Calu3 (cell line): ENCODE measurements at regions of chr1 and their contacts with region 1.

Region 1: GRCh38 chr1:167276969-167277368 is 56.3 kb downstream of the POU2F1 start:
- DNase-seq: no peak
- H3K4me3 Mint-ChIP-seq: no peak overlapping the region
- H3K27ac Mint-ChIP-seq: no peak overlapping the region
- H3K4me1 Mint-ChIP-seq: peaks cover 9% of the 10 kb centered on the region
- H3K27me3 Mint-ChIP-seq: no peaks in the 10 kb centered on the region
- CTCF ChIP-seq: no peak

Region 2: DNA sequence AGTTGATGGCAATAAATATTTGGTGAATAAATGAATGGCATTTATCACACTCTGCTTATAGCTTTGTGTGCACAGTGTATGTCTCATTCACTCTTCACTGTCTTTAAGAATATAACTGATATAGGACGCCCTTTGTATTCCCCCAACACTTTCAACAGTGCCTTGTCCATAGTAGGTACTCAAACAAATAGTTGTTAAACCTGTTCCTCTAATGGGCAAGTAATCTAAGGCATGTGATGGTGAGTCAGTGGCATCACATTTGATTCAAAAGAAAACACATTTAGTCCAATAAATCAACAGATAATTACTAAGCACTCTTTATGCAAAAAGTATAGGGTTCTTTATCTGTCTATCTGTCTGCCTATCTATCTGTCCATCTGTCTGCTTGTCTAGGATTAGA is 1820.8 kb before region 1 on chr1:
- CTCF ChIA-PET with region 1: no interaction called
- intact Hi-C with region 1: no loop called
- DNase-seq: peak; percentile 34
- H3K4me3 Mint-ChIP-seq: no peak overlapping the region
- H3K27ac Mint-ChIP-seq: peak overlapping the region; percentile 73
- H3K4me1 Mint-ChIP-seq: peaks cover 27% of the 10 kb centered on the region
- H3K27me3 Mint-ChIP-seq: no peaks in the 10 kb centered on the region
- CTCF ChIP-seq: no peak

Region 3: GRCh38 chr1:166902271-166902670 is 374.7 kb before region 1 on chr1:
- CTCF ChIA-PET with region 1: no interaction called
- intact Hi-C with region 1: no loop called
- DNase-seq: peak; percentile 22
- H3K4me3 Mint-ChIP-seq: no peak overlapping the region
- H3K27ac Mint-ChIP-seq: no peak overlapping the region
- H3K4me1 Mint-ChIP-seq: peaks cover 10% of the 10 kb centered on the region
- H3K27me3 Mint-ChIP-seq: no peaks in the 10 kb centered on the region
- CTCF ChIP-seq: no peak

Region 4: GRCh38 chr1:167457936-167458583 is 181.1 kb after region 1 on chr1:
- CTCF ChIA-PET with region 1: interaction called, 11 read pairs
- intact Hi-C with region 1: no loop called
- DNase-seq: no peak
- H3K4me3 Mint-ChIP-seq: no peak overlapping the region
- H3K27ac Mint-ChIP-seq: no peak overlapping the region
- H3K4me1 Mint-ChIP-seq: no peaks in the 10 kb centered on the region
- H3K27me3 Mint-ChIP-seq: peaks cover 25% of the 10 kb centered on the region
- CTCF ChIP-seq: no peak